Posterior cingulate gyrus (tissue), 11 donors: ENCODE measurements at regions of chr5 and their contacts with region 1.

Region 1: DNA sequence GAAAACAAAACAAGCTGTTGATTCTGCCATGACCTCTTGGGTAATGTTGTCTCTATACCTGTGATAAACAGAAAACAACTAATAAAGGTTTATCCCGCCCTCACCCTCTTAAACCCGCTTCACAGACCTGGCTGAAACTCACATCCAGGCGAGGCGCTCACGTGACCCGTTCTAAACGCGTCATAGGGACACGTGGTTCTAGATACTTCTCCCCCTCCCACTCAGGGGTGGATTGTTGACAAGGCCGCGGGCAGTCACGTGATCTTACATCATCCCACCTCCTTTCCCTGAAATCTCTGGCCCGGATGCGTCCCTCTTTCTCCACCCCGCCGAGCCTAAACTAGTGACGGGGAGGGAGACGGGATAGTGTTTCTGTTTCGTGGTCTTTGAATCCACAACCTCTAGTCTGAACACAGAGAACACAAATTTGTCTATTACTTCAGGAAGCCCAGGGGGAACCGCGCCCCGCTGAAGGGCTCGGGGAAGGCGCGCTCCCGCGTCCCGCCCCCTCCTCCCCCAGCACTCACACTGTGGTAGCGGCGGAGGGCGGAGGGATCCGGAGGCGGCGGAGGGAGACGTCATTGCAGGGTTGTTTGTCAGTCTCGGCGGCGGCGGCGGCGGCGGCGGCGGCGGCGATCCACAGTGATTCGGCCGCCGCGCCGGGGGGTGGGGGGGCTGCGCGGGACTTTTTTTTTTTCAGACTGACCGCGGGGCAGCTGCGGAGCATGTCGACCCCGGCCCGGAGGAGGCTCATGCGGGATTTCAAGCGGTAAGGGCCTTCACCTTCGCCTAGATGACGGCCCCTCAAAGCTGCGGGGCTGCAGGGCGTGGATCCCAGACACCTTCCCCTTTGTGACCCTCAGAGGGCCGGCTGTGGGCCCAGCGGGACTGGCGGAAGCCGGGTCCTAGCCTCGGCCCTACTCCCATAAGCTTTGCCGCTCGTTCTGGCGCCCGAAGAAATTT is at the start of gene UBE2B:
- DNase-seq: peak; percentile 96 to 99 (median 98)

Region 2: GRCh38 chr5:134184155-134185135 is 186.7 kb before region 1 on chr5:
- intact Hi-C with region 1: loop called (anchors 10 kb)
- DNase-seq: peak in 9 of 10 donors; percentile 32 to 95 (median 73)

Region 3: GRCh38 chr5:134225618-134226440 is 145.3 kb before region 1 on chr5 and contains the start of gene PPP2CA:
- intact Hi-C with region 1: loop called (anchors 5 kb)
- DNase-seq: peak; percentile 97 to 100 (median 99)

Region 4: GRCh38 chr5:134411546-134412266 is 40.6 kb after region 1 on chr5 and contains the start of gene CDKN2AIPNL:
- intact Hi-C with region 1: loop called (anchors 1 kb)
- DNase-seq: peak; percentile 90 to 99 (median 96)

Region 5: GRCh38 chr5:134451936-134452505 is 80.9 kb after region 1 on chr5:
- intact Hi-C with region 1: no loop called
- DNase-seq: peak in 6 of 10 donors; percentile 20 to 87 (median 42)

Region 6: DNA sequence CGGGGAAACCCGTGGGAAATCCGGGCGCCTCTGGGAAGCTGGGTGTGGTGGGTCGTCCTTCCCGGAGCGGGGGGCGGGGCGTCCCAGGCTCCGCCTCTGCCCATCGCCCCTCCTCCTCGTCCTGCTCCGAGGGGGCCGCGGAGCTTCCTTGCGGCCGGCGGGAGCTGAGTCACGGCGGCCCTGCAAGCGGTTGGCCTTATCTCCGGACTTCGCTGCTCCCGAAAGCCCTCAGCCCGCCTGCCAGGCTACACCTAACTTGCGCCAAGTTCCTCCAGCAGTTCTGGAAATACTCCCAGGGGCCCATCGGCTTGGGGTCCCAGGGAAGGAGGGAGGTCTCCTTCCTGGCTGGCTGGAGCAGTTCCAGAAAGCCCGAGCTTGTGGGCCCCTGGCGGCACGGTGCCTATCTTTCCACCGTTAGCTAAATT is 94.7 kb after region 1 on chr5:
- intact Hi-C with region 1: loop called (anchors 5 kb)
- DNase-seq: peak; percentile 49 to 97 (median 79)

Region 7: DNA sequence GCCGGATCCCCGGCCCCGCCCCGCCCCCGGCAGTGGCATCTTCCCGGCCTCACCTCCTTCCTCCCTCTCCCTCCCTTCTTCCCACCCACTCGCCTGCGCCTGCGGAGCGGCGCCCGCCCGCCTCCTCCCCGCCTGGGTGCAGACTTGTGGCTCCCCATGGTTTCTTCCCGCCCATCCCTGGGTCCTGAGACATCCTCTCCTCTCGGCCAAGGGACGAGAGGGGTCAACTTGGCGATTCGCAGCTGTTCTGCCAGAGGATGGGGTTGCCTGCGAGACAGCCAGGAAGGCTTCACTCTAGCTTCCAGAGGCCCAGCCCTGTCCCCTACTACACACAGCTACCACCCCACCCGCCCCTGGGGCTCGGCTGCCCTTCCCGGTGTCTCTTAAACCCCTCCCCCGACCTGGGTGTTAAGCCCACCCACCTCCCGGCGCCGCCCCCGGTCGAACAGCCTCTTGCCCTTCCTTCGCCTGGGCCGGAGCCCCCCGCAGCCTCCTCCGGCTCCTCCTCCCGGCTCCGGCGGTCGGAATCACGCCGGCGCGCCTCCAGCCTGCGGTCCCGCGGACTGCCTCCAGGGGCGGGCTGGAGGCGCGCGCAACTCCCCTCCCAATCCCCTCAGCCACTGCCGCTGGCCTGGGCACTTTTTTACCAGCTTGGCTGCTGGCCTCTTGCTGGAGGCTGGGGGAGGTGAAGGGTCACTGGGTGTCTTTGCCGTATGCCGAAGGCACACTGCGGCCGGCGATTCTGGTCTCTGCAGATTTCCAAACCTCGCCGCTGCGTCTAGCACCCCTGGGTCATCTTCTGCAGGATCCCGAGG is 156.2 kb after region 1 on chr5:
- intact Hi-C with region 1: loop called (anchors 1 kb)
- DNase-seq: peak; percentile 65 to 96 (median 78)

Region 8: DNA sequence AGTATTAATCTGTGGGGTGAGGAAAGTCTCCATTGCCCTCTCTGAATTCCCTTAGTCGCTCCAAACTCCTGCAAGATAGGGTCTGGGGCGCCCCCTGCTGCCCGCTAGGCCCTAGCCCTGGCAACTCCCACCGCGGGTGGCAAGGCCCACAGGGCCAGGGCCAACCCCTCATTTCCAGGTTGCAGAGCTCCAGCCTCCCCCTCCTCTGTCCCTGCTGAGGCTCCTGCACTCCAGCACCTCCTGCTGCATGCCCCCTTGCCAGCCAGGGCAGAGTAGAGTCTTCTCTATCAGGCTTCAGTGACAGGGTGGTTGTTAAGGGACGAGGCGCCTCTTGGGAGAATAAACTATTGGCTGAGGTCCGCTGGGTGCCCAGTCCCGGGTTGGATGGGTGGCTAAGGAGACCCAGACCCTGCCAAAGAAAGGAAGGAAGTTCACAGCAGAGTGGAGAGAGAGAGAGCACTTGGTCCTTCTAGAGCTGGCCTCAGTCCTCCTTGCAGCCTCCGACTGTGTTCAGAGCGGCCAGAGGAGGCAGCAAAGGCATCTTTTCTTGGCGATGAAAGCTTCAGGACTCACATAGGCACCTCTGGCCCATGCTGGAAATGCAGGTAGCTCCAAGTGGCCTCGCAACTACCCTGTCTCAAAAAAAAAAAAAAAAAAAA is 215.8 kb after region 1 on chr5:
- intact Hi-C with region 1: loop called (anchors 10 kb)
- DNase-seq: peak; percentile 56 to 96 (median 80)